ENCODE measurements at regions of chr14 and their contacts with region 1.

Region 1: DNA sequence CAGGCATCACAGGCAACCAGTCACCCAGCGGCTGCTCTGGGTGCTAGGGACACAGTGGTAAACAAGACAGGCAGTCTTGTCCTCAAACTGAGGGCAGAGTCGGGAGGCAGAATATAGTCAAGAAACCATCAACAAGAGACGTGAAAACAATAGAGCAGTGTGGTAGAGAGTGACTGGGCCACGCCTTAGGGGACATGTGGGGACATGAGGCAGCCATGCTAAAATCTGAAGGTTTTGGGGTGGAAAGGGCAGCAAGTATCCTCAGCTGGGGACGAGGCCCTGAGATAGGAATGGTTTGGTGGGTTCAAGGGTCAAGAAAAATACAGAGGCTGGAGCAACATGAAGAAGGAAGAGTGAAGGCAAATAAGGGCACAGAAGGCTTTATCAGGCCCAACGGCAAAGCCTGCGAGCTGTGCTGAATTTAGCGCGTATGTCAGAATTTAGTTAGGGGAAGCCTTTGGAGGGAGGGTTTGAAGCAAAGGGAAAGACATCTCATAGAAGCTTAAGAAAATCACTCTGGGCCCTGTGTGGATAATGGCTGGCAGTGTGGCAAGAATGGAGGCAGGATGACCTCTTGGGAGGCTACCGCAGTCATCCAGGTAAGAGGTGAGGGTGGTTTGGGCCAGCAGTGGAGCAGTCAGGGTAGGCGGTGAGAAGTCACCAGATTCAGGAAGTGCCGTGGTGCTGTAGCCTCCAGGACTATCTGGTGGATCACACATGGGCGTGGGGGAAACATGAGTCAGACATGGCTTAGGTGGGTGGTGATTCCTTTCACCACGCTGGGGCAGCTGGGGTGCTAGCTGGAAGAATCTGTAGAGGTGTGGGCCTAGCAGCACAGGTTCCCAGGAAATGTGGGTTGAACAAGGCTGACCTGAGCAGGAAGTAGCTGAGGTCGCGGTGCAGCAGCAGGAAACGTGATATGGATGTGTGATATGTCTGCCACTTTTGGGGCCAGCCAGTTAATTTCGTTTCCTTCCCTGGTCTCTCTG is 3.0 kb downstream of the EVL start:
- DNase-seq: peak; percentile 56 to 92 (median 89)
- ATAC-seq: peak; percentile 74
- H3K4me3 ChIP-seq: peak overlapping the region; percentile 85
- H3K4me3 Mint-ChIP-seq: peak overlapping the region; percentile 92 to 99 (median 95)
- H3K27ac ChIP-seq: peak overlapping the region; percentile 98
- H3K27ac Mint-ChIP-seq: peak overlapping the region; percentile 96 to 100 (median 98)
- H3K4me1 ChIP-seq: peaks cover 42 to 60% of the 10 kb centered on the region in 2 donors
- H3K4me1 Mint-ChIP-seq: peaks cover 42 to 73% (median 61%) of the 10 kb centered on the region in 7 donors
- H3K27me3 ChIP-seq: no peaks in the 10 kb centered on the region
- H3K27me3 Mint-ChIP-seq: peaks cover 0 to 2% (median 0%) of the 10 kb centered on the region in 5 donors

Region 2: DNA sequence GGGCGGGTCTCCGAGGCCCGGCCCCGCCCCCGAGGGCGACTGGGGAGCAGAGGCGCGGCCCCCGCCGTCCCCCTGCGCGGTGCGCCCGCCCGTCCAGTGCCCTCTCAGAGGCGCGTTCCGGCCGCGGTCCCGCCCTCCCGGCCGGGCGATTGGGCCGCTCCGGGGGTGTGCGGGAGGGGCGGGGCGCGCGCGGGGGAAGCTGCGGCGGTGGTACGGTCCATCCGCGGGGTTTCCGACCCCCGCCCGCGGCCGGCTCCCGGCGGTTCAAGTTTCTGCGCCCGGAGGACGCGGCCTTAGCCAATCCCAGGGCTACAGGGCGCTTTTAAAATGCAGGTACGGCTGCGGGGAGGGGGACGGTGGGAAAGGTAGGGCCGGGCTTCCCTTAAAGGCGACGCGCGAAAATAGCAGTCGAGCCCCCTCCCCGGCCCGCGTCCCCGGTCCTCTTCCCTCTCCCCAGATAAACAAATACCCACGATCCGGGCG is 463.9 kb before region 1 on chr14:
- CTCF ChIA-PET with region 1: no interaction called
- POLR2A ChIA-PET with region 1: interaction called, 3 read pairs
- intact Hi-C with region 1: loop called in 1 of 2 experiments (anchors 10 kb)
- DNase-seq: peak; percentile 93 to 99 (median 97)
- ATAC-seq: peak; percentile 95
- H3K4me3 ChIP-seq: peak overlapping the region; percentile 95
- H3K4me3 Mint-ChIP-seq: peak overlapping the region; percentile 83 to 97 (median 91)
- H3K27ac ChIP-seq: peak overlapping the region; percentile 80
- H3K27ac Mint-ChIP-seq: peak overlapping the region; percentile 62 to 97 (median 86)
- H3K4me1 ChIP-seq: peaks cover 16 to 19% of the 10 kb centered on the region in 2 donors
- H3K4me1 Mint-ChIP-seq: peaks cover 7 to 40% (median 38%) of the 10 kb centered on the region in 7 donors
- H3K27me3 ChIP-seq: no peaks in the 10 kb centered on the region
- H3K27me3 Mint-ChIP-seq: peaks cover 0 to 13% (median 0%) of the 10 kb centered on the region in 5 donors

Region 3: DNA sequence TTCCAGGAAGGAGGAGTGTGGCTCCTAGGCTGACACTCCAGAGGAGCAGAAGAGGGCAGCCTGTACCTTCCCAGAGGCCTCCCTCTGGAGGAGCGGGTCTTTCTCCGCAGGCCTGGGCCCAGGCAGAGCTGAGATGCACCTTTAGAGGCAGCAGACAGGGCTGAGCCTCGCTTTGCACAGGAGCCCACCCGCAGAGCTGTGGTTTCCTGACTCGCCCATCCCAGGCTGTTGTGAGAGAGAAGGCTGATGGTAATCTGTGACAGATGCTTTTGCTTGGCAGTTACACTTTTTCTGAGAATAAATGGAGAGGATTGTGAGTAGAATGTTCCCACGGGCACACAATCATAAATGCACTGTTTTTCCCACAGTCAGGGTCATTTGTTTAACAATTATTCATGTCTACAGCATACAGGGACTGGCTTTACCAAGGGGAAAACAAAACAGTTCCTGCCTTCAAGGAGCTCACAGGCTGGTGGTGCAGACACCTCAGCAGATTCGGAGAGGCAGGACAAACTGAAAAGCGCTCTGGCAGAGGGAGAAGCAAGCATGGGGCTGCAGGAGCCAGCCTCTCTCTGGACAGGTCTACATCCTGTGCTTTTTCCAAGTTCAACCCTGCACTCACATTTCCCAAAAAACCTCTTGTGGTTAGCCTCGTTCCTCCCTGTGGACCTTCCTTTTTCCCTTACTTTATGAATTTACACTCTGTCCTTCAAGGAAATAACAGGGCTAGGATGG is 10.9 kb after region 1 on chr14:
- CTCF ChIA-PET with region 1: interaction called, 192 read pairs
- POLR2A ChIA-PET with region 1: interaction called, 2,344 read pairs
- intact Hi-C with region 1: loop called (anchors 1 kb)
- DNase-seq: peak; percentile 53 to 93 (median 90)
- ATAC-seq: peak; percentile 83
- H3K4me3 ChIP-seq: peak overlapping the region; percentile 39
- H3K4me3 Mint-ChIP-seq: peak overlapping the region; percentile 78 to 98 (median 87)
- H3K27ac ChIP-seq: peak overlapping the region; percentile 98
- H3K27ac Mint-ChIP-seq: peak overlapping the region; percentile 89 to 100 (median 98)
- H3K4me1 ChIP-seq: peaks cover 88 to 100% of the 10 kb centered on the region in 2 donors
- H3K4me1 Mint-ChIP-seq: peaks cover 83 to 99% (median 96%) of the 10 kb centered on the region in 7 donors
- H3K27me3 ChIP-seq: no peaks in the 10 kb centered on the region
- H3K27me3 Mint-ChIP-seq: no peaks in the 10 kb centered on the region

Region 4: GRCh38 chr14:100192672-100193416 is 124.6 kb after region 1 on chr14:
- CTCF ChIA-PET with region 1: interaction called, 14 read pairs
- POLR2A ChIA-PET with region 1: interaction called, 17 read pairs
- intact Hi-C with region 1: loop called in 1 of 2 experiments (anchors 1 kb)
- DNase-seq: peak; percentile 98 to 100 (median 99)
- ATAC-seq: peak; percentile 99
- H3K4me3 ChIP-seq: peak overlapping the region; percentile 56
- H3K4me3 Mint-ChIP-seq: peak overlapping the region; percentile 25 to 80 (median 60)
- H3K27ac ChIP-seq: peak overlapping the region; percentile 74
- H3K27ac Mint-ChIP-seq: peak overlapping the region; percentile 84 to 95 (median 93)
- H3K4me1 ChIP-seq: peaks cover 6 to 13% of the 10 kb centered on the region in 2 donors
- H3K4me1 Mint-ChIP-seq: peaks cover 5 to 18% (median 15%) of the 10 kb centered on the region in 7 donors
- H3K27me3 ChIP-seq: no peaks in the 10 kb centered on the region
- H3K27me3 Mint-ChIP-seq: no peaks in the 10 kb centered on the region

Region 5: DNA sequence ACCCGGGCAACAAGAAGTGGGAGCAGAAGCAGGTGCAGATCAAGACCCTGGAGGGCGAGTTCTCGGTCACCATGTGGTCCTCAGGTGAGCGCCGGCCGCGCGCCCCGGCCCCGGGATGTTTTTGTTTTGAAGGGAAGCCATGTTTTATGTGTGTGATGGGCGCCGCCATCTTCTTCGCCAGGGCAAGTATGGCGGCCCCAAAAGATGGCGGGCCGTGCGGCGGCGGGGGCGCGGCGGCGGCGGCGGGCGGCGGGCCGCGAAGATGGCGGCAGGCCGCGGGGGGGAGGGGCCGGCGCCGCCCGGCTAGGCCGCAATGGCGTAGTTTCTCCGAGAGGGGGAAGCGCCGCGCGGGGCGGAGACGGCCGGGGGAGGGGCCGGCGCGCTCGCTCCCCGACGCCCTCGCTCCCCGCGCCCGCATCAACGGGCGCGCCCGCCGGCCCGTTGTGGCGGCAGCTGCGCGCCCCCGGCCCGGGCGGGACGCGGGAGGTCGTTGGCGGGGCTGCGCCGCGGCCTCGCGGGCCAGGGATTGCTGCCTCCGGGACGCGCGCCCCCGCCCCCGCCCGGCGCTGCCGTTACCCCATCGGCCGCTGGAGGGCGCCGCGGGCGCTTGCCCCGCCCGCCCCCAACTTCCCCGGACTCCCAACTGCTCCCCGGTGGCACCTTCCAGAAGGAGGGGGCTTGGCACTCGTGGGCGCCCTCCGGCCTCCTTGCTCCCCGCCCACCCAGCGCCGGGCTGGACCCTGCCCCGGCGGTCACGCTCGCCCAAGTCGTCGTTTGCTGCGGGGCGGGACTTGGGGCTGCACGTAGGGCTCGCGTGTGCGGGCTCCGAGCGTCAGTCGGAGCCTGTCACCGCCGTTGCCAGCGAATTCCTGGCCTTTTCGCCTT is 171.8 kb after region 1 on chr14:
- CTCF ChIA-PET with region 1: no interaction called
- POLR2A ChIA-PET with region 1: interaction called, 6 read pairs
- intact Hi-C with region 1: loop called (anchors 2 kb)
- DNase-seq: peak; percentile 81 to 91 (median 88)
- ATAC-seq: peak; percentile 65
- H3K4me3 ChIP-seq: peak overlapping the region; percentile 85
- H3K4me3 Mint-ChIP-seq: peak overlapping the region; percentile 88 to 100 (median 94)
- H3K27ac ChIP-seq: peak overlapping the region; percentile 98
- H3K27ac Mint-ChIP-seq: peak overlapping the region; percentile 85 to 99 (median 96)
- H3K4me1 ChIP-seq: peaks cover 35 to 43% of the 10 kb centered on the region in 2 donors
- H3K4me1 Mint-ChIP-seq: peaks cover 41 to 69% (median 53%) of the 10 kb centered on the region in 7 donors
- H3K27me3 ChIP-seq: no peaks in the 10 kb centered on the region
- H3K27me3 Mint-ChIP-seq: peaks cover 0 to 2% (median 0%) of the 10 kb centered on the region in 5 donors

Region 6: DNA sequence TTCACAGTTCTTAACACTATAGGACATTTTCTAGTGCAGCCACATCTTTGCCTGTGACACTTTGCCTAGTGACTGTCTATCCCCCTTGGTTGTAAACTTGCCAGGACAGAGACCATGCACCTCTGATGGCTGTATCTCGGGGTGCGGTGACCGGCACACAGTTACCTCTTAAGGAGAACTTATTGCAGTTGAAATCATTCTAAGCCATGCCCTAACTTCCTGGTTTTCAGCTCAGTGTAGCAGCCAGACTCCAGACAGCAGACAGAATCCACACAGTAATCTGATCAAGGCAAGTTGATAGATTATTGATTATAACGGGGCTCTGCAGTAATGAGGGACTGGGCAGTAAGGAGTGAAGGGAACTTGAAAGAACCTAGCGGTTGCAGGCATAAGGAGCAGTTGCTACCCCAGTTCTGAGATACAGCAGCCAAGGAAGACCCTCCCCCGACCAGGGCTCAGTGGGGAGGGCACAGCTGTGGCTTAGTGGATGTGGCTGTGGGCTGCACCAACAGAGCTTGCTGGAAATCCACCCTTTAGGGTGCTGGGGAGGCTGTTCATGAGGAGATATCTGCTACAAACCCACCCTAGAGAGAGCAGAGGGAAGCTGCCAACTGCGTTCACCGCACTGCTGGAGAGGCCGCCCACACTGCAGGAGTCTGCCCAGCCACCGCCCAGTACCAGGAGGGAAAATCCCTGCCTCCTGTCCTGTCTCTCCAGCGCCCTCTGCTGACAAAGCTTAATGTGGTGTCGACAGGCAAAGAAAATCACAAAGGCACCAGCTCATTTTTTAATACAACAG is 577.1 kb after region 1 on chr14:
- CTCF ChIA-PET with region 1: no interaction called
- POLR2A ChIA-PET with region 1: no interaction called
- intact Hi-C with region 1: loop called in 1 of 2 experiments (anchors 10 kb)
- DNase-seq: peak; percentile 65 to 84 (median 81)
- ATAC-seq: peak; percentile 97
- H3K4me3 ChIP-seq: no peak overlapping the region
- H3K4me3 Mint-ChIP-seq: peak overlapping the region; percentile 1 to 77 (median 22)
- H3K27ac ChIP-seq: no peak overlapping the region
- H3K27ac Mint-ChIP-seq: peak overlapping the region; percentile 21 to 80 (median 66)
- H3K4me1 ChIP-seq: peaks cover 31% of the 10 kb centered on the region in 2 donors
- H3K4me1 Mint-ChIP-seq: peaks cover 33 to 57% (median 54%) of the 10 kb centered on the region in 7 donors
- H3K27me3 ChIP-seq: no peaks in the 10 kb centered on the region
- H3K27me3 Mint-ChIP-seq: peaks cover 0 to 23% (median 0%) of the 10 kb centered on the region in 5 donors

Measured in naive thymus-derived CD4-positive, alpha-beta T cell (primary cell).